ENCODE measurements at regions of chr17 and their contacts with region 1.

Region 1: DNA sequence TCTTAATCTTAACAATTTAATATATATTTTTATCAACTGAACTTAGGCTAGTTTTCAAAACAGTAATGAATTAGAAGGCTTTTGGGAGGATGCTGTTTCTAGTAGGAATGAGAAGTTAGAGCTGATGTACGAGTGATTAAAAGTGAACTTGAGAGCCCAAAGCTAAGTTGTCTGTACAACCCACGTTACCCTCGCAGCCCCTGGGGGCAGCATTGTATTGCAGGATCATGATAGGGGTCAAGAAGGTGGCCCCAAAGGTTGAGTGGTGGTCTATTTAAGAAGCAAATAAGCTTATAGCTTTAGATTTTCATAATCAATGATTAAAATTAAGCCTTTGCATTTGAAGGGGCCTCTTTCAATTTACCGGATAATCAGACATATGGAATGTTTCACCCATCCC is 33.7 kb upstream of the ALDH3A2 start:
- DNase-seq: no peak
- H3K4me3 ChIP-seq: no peak overlapping the region
- H3K27ac ChIP-seq: no peak overlapping the region
- H3K4me1 ChIP-seq: no peaks in the 10 kb centered on the region
- H3K27me3 ChIP-seq: no peaks in the 10 kb centered on the region
- CTCF ChIP-seq: no peak
- POLR2A ChIP-seq: no peak

Region 2: DNA sequence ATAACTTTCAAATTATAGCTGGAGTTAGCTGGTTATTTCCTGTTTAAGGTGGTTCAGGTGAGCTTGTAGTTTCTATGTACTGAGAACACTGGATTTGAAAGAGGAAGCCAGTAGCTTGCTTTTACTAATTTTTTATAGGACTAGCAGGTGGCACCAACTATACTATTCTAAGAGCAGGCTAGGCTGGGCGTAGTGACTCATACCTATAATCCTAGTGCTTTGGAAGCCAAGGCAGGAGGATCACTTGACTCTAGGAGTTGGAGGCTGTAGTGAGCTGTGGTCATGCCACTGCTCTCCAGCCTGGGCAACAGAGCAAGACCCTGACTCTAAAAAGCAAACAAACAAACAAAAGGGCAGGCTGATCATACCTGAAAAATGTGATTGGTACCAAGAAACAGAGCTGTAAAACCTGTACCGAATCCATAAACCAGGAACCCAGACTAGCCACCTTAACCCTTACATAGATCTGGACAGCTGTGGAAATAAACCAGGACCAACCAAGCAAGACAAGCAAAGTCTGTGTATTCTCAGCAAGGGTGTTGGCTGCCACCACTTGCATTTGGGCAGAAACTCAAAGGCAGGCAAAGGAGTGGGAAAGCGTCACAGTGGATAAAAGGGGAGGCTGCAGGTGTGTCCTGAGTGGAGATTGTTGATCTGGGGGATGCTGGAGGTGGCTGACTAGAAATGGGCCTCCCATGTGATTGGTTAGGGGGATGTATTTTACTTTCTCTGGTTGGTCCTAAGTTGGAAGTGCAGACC is 44.9 kb before region 1 on chr17:
- intact Hi-C with region 1: loop called (anchors 10 kb)
- DNase-seq: no peak
- H3K4me3 ChIP-seq: no peak overlapping the region
- H3K27ac ChIP-seq: no peak overlapping the region
- H3K4me1 ChIP-seq: peaks cover 0 to 5% (median 0%) of the 10 kb centered on the region in 3 donors
- H3K27me3 ChIP-seq: peaks cover 0 to 4% (median 0%) of the 10 kb centered on the region in 4 donors
- CTCF ChIP-seq: no peak
- POLR2A ChIP-seq: no peak